ENCODE measurements at regions of chr10 and their contacts with region 1.

Region 1: DNA sequence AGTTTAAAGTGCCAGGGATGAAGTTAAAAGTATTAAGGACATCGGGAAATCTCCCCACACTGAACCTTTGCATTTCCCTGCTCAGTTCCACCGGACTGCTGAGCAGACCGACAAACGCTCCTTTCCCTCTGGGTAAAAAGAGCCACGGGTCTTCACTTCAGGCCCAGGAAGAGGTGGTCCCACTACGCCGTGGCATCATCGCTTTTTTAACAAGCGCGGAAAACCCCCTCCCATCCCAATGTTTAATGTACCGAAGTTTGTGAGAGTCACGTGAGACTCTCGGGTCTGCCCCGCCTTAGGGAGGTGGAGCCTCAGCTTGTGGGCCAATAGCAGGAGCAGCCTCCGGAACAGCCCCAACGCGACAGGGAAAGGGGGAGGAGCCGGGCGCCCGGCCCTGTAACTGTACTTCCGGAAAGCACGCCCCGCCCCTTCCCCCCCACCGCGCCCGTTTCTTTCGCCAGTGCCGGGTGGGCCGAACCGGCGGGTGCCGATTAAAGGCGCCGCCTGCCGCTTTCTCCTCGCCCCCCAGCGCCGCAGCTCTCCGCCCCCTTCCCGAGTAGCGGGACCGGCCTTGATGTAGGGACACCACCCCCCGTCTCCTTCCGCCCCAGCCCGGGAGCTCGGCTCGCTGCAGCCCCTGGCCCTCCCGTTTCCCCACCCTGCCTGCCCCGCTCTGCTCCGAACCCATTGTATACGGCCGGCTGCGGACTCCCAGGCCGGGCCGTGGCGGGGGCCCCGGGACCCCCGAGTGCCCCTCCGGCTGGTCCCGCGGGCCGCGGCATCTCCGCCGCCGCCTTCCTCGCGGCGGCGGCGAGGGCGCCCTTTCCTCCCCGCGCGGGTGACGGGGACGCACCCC is 2.2 kb upstream of the TRIM8 start:
- DNase-seq: peak; percentile 99
- H3K4me3 Mint-ChIP-seq: peak overlapping the region; percentile 92
- H3K27ac Mint-ChIP-seq: peak overlapping the region; percentile 92
- H3K4me1 Mint-ChIP-seq: peaks cover 18% of the 10 kb centered on the region
- H3K27me3 Mint-ChIP-seq: no peaks in the 10 kb centered on the region

Region 2: DNA sequence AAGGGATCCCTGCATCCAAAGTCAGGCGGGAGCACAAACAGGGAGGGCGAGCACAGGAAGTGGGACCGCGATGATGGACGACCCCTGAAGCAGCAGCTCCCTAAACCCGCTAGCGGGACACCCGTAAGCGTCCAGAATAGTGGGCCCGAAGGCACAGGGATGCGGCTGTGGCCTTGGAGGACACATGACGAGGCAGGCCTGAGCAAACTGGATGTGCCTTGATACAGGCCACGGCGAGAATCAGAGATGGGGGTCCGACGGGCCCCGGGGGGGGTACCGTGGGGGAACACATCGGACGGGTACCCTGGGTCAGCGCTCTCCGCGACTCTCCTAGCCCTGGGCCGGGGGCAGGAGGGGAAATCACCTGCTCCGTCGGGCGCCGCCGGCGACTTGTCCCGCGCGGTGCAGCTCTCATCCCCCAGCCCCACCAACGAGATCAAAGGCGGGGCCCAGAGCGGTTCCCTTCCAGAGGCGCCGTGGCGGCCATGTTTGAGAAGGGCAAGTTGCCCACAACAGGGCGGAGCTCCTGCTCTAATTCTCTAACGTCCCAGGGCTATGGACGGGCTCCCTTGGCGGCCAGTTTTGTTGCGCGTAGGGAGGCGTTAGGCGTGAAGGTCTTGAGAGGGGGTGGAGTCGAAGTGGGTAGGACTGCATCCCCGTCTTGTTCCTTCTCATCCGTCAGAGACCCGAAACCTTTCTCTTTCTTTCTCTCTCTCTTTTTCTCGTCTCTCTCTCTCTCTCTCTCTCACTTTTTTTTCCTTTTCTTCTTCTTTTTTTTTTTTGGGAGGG is 209.8 kb before region 1 on chr10 and contains the start of gene CUEDC2:
- intact Hi-C with region 1: loop called (anchors 10 kb)
- DNase-seq: peak; percentile 100
- H3K4me3 Mint-ChIP-seq: peak within 1 kb of the TSS; percentile 85
- H3K27ac Mint-ChIP-seq: peak within 1 kb of the TSS; percentile 81
- H3K4me1 Mint-ChIP-seq: peaks cover 48% of the 10 kb centered on the region
- H3K27me3 Mint-ChIP-seq: no peaks in the 10 kb centered on the region
- total RNA-seq, gene CUEDC2: 64.2 and 67.6 TPM in 2 replicates

Region 3: DNA sequence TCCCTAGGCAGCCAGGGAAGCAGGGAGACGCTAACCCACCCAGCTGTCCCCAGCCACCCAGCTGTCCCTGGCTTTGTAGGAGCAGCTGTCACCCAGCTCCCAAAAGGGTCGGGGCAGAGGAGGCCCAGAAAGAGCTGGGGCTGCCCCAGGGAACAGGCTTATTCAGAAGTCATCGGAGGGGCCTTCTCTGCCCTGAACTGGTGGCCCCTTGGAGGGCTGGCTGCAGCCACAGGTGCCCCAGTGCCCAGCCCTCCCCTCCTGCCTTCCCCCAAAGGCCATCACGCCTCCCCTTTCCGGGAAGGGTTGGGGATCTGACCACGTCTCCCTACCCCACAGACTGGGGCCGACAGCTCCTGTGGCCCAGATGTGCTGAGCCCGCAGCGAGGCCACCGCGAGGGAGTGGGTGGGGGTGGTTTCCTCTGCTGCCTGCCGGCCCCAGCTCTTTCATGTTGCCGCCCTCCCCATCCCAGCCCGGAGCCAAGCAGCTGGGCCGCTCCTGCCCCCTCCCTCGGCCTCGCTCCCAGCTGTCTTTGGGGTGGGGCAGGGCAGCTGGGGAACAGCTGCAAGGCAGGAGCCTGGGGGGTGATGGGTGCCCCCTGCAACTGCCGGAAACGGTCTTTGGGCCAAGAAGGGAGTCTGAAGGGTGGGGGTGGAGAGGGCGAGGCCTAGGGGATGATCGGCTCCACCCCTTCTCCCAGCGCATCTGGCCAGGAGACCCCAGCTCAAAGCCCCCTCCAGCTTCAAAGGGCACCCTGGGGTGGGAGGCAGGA is 19.0 kb after region 1 on chr10:
- intact Hi-C with region 1: loop called (anchors 1 kb)
- DNase-seq: peak; percentile 91
- H3K4me3 Mint-ChIP-seq: peak overlapping the region; percentile 72
- H3K27ac Mint-ChIP-seq: peak overlapping the region; percentile 88
- H3K4me1 Mint-ChIP-seq: peaks cover 37% of the 10 kb centered on the region
- H3K27me3 Mint-ChIP-seq: no peaks in the 10 kb centered on the region

Region 4: DNA sequence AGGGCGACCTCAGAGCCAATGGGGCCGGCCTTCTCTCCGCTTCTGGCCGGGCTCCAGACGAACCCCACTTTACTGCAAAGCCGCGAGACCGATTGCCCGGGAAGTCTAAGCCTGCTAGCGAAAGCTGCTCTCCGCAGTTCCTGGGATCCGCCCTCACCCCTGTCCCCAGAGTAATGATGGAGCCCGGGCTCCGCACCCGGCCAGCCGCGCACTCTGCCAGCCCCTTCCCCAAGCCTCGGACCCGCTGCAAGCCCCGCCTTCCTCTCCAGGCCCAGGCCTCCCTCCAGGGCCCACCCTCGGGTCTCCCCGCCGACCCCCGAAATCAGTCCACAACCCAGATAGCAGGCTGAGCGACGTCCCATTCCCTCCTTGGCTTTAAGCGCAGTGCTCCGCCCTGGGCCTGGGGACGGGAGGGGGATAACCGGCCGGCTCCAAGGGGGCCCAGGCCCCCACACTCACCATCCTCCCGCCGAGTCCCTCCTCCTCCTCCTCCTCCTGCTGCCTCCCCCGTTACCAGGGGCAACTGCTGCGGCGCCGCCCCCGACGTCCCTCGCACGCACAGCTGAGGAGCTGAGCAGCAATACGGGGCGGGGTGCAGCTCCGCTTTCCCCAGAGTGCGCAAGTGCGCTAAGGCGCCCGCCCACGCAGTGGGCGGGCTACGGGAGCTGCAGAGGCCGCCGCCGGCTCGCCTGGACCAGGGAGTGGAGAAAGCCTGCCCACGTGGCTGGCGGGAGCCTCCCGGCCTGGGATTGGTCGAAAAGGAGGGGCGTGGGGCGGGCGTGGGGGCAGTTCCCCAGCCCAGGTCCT is 71.9 kb after region 1 on chr10 and contains the start of gene ARL3:
- intact Hi-C with region 1: loop called (anchors 1 kb)
- DNase-seq: peak; percentile 98
- H3K4me3 Mint-ChIP-seq: peak within 1 kb of the TSS; percentile 80
- H3K27ac Mint-ChIP-seq: peak within 1 kb of the TSS; percentile 93
- H3K4me1 Mint-ChIP-seq: peaks cover 41% of the 10 kb centered on the region
- H3K27me3 Mint-ChIP-seq: no peaks in the 10 kb centered on the region
- total RNA-seq, gene ARL3: 6.3 and 6.4 TPM in 2 replicates

Region 5: DNA sequence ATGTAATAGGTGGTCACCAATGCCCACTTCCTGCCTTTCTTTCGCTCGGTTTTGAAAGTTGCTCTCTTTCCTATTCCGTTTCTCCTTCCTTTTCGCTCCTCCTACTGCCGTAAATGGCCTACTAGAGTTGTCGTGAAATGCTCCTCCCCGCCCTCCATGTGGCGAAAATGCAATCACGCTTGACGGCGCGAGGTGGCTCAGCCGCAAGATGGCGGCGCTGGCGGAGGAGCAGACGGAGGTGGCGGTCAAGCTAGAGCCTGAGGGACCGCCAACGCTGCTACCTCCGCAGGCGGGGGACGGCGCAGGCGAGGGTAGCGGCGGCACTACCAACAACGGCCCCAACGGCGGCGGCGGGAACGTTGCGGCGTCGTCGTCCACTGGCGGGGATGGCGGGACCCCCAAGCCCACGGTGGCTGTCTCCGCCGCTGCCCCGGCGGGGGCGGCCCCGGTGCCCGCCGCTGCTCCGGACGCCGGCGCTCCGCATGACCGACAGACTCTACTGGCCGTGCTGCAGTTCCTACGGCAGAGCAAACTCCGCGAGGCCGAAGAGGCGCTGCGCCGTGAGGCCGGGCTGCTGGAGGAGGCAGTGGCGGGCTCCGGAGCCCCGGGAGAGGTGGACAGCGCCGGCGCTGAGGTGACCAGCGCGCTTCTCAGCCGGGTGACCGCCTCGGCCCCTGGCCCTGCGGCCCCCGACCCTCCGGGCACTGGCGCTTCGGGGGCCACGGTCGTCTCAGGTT is 725.8 kb after region 1 on chr10 and contains the start of gene TAF5:
- intact Hi-C with region 1: loop called (anchors 5 kb)
- DNase-seq: peak; percentile 97
- H3K4me3 Mint-ChIP-seq: peak within 1 kb of the TSS; percentile 93
- H3K27ac Mint-ChIP-seq: peak within 1 kb of the TSS; percentile 92
- H3K4me1 Mint-ChIP-seq: peaks cover 12% of the 10 kb centered on the region
- H3K27me3 Mint-ChIP-seq: peaks cover 4% of the 10 kb centered on the region
- total RNA-seq, gene TAF5: 11.9 and 12.1 TPM in 2 replicates